ENCODE measurements at regions of chr5 and their contacts with region 1.

Region 1: DNA sequence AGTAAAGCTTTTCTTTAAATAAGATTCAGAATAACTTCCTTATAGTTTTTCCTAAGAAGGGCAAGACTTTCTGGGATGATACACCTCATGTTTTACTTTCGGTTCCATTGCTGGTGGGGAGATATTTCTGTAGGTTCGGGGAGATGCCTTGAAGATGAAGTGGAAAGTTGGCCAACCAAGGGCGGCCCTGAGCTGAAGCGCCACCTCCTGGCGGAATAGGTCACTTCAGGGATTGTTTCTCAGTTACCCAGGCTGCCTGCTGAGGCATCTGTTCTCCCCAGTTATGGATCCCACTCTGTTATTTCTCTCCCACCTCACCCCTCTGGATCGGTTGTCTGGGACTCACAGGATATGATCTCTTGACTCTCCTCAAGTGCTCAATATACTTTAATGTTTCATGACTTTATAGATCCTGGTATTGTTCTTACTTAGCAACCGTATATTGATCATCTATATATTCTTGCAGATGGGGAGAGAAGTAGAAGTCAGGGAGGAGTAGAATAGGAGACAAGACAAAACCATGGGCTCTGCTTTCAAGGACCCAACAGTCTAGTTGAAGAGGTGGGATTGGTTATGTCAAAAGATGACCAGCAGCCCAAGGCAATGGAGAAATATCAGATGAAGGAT is 23.4 kb downstream of the MEGF10 start:
- DNase-seq: no peak
- H3K4me3 ChIP-seq: no peak overlapping the region
- CTCF ChIP-seq: peak; percentile 88

Region 2: GRCh38 chr5:127330116-127330515 is 16.2 kb after region 1 on chr5:
- CTCF ChIA-PET with region 1: interaction called, 34 read pairs
- POLR2A ChIA-PET with region 1: no interaction called
- DNase-seq: no peak
- H3K4me3 ChIP-seq: no peak overlapping the region
- CTCF ChIP-seq: no peak

Region 3: DNA sequence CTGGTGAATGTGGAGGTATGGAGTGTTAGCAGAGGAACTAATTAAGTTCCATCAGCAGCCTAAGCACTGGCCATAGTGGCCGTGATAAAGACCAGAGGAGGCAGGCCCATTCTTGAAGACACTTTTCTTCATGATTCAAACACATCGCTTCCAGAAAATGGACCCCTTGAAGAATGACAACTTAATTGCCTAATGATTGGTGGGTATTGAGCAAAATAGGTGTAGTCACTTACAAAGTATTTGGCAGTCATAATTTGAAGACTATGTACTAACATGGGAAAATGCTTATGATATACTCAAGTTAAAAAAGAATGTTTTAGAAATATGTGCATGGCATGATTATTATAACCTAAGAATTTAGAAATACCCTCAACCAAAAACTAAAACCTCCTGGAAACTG is 21.4 kb after region 1 on chr5:
- CTCF ChIA-PET with region 1: interaction called, 34 read pairs
- POLR2A ChIA-PET with region 1: no interaction called
- DNase-seq: no peak
- H3K4me3 ChIP-seq: no peak overlapping the region
- CTCF ChIP-seq: no peak

Region 4: GRCh38 chr5:127400946-127401670 is 87.1 kb after region 1 on chr5:
- CTCF ChIA-PET with region 1: no interaction called
- POLR2A ChIA-PET with region 1: no interaction called
- DNase-seq: no peak
- H3K4me3 ChIP-seq: no peak overlapping the region
- CTCF ChIP-seq: no peak

Measured in AG04449 (cell line).